Dendritic cell treated with granulocyte-macrophage colony-stimulating factor and Interleukin-4, amounts not matched to agents 40 ng/mL and 50 ng/mL, for 4 days (primary cell): ENCODE measurements at regions of chr10 and their contacts with region 1.

Region 1: DNA sequence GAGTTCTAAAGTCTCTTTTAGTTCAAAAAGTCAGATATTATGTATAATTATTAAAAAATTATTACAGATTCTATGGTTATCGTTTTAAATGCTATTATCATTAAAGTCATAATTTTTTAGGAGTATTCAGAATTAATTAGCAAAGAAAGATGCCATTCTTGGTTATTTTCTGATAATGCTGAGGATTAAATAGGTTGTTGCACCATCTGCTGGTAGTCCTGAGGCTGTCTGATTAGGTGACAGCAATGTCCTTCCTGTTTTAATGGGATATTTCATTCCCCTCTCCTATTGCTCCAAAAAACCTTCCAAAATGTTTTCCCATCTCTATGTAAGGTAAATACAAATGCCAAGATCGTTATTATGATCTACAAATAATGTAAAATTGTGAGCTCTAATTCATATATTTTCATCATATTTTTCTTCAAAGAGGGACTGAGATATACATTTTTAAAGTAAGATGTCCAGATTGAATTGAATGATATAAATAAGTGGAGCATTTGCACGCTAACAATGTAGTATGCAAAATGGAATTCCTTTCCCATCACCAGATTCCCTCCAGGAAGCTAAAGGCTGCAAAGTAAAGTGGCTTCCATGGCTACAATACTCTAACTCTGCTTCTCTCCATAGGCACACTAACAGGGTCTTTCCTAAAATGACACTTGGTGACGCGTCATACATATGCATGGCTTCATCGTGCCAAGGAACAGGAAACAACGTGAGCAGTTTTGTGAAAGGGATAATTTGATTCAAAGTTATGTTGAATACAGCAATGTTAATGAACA is 58.8 kb upstream of the AKR1E2 start:
- H3K4me3 Mint-ChIP-seq: no peak overlapping the region
- H3K27ac Mint-ChIP-seq: no peak overlapping the region
- H3K4me1 Mint-ChIP-seq: no peaks in the 10 kb centered on the region
- H3K27me3 Mint-ChIP-seq: peaks cover 7% of the 10 kb centered on the region

Region 2: GRCh38 chr10:3197348-3198003 is 1569.7 kb before region 1 on chr10:
- intact Hi-C with region 1: loop called (anchors 5 kb)
- H3K4me3 Mint-ChIP-seq: peak overlapping the region; percentile 31
- H3K27ac Mint-ChIP-seq: peak overlapping the region; percentile 53
- H3K4me1 Mint-ChIP-seq: peaks cover 12% of the 10 kb centered on the region
- H3K27me3 Mint-ChIP-seq: peaks cover 71% of the 10 kb centered on the region

Region 3: GRCh38 chr10:3239066-3239919 is 1527.9 kb before region 1 on chr10:
- intact Hi-C with region 1: loop called (anchors 1 kb)
- H3K4me3 Mint-ChIP-seq: no peak overlapping the region
- H3K27ac Mint-ChIP-seq: no peak overlapping the region
- H3K4me1 Mint-ChIP-seq: peaks cover 5% of the 10 kb centered on the region
- H3K27me3 Mint-ChIP-seq: peaks cover 40% of the 10 kb centered on the region

Region 4: DNA sequence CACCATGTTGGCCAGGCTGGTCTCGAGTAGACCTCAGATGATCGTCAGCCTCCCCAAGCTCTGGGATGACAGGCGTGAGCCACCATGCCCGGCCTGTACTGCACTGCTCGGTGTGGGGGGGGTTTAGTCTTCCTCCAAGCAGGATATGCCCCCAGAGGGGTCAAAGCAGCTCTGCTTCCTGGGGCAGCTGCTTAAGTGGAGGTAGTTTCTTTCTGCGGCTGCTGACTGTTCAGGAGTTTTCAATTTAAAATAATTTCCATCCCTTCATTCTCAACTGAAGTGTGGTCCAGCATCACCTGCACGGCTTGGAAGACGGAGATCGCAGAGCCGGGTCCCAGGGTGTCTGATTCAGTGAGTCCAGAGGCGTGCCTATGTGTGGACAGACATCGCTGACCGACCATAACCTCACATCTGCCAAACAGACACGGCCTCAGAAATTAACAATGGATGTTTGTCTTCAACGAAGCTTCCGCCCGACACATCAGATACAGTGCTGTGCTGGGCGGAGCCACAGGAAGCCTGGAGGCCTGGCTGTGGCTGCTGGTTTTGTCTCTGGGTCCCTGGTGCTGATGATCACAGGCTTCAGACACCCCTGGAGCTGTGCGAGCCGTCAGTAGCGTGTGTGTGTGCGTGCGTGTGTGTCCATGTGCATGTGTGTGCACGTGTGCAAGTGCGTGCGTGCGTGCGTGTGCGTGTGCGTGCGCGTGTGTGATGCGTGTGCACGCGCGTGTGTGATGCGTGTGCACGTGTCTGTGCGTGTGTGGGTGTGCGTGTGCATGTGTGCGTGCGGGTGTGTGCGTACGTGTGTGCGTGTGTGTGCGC is 1368.2 kb before region 1 on chr10:
- intact Hi-C with region 1: loop called (anchors 10 kb)
- H3K4me3 Mint-ChIP-seq: no peak overlapping the region
- H3K27ac Mint-ChIP-seq: no peak overlapping the region
- H3K4me1 Mint-ChIP-seq: peaks cover 19% of the 10 kb centered on the region
- H3K27me3 Mint-ChIP-seq: peaks cover 19% of the 10 kb centered on the region

Region 5: GRCh38 chr10:3873728-3874461 is 893.3 kb before region 1 on chr10:
- intact Hi-C with region 1: loop called (anchors 5 kb)
- H3K4me3 Mint-ChIP-seq: no peak overlapping the region
- H3K27ac Mint-ChIP-seq: peak overlapping the region; percentile 74
- H3K4me1 Mint-ChIP-seq: peaks cover 57% of the 10 kb centered on the region
- H3K27me3 Mint-ChIP-seq: no peaks in the 10 kb centered on the region

Region 6: GRCh38 chr10:4131407-4132228 is 635.6 kb before region 1 on chr10:
- intact Hi-C with region 1: loop called (anchors 2 kb)
- H3K4me3 Mint-ChIP-seq: no peak overlapping the region
- H3K27ac Mint-ChIP-seq: no peak overlapping the region
- H3K4me1 Mint-ChIP-seq: peaks cover 18% of the 10 kb centered on the region
- H3K27me3 Mint-ChIP-seq: no peaks in the 10 kb centered on the region

Region 7: GRCh38 chr10:4656576-4657182 is 110.5 kb before region 1 on chr10:
- intact Hi-C with region 1: loop called (anchors 10 kb)
- H3K4me3 Mint-ChIP-seq: no peak overlapping the region
- H3K27ac Mint-ChIP-seq: no peak overlapping the region
- H3K4me1 Mint-ChIP-seq: no peaks in the 10 kb centered on the region
- H3K27me3 Mint-ChIP-seq: peaks cover 9% of the 10 kb centered on the region